ENCODE measurements at regions of chr7 and their contacts with region 1.

Region 1: DNA sequence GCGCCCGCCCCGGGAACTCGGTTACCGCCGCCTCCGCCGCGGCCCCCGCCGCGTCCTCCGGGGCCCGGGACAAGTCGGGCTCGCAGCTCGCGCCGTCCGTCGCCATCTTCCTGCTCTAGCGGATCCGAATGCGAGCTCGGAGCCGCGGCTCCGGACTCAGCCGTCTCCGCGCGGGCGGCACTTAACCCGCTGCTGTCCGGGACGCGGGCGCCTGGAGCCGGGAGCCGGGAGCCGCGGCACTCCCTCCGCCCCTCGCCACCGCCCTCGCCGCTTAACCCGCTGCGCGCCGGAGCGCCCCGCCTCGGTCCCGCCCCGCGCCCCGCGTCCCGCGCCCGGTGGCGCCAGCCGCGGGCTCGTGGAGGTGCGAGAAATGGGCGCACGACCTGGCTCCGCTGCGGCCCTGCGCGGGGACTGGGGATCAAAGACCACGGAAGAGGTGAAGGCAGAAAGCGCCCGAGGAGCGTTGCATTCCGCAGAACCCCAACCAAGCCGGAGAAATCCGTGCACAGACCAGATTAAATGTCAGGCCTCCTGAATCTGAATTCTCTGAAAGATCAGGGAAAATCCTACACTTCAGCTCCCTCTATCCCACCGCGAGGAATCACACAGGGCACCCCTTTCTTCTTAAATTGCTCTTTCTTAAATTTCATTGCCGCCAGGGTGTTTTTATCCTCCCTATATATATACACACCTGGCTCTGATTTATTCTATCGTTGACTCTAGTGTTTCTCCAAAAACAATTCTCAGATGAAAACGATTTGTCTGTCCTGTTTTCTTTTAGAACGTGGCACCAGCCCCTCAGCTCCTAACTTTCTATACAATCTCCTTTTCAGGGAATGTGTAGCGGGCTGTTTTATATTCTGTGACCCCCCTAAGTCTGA is at the start of gene CTTNBP2:
- DNase-seq: peak; percentile 45 to 85 (median 69)
- H3K4me3 ChIP-seq: peak within 1 kb of the TSS; percentile 64 to 99 (median 93)
- H3K27ac ChIP-seq: peak within 1 kb of the TSS; percentile 52 to 99 (median 97)
- H3K27me3 ChIP-seq: no peaks in the 10 kb centered on the region
- CTCF ChIP-seq: peak in 24 of 56 donors; percentile 4 to 38 (median 20)
- total RNA-seq, gene CTTNBP2: 32.0 to 119 (median 57.5) TPM

Region 2: GRCh38 chr7:117673839-117674238 is 199.7 kb before region 1 on chr7:
- intact Hi-C with region 1: loop called in 1 of 2 experiments (anchors 5 kb)
- DNase-seq: no peak
- H3K4me3 ChIP-seq: peak overlapping the region in 53 of 59 donors; percentile 2 to 68 (median 38)
- H3K27ac ChIP-seq: peak overlapping the region in 54 of 59 donors; percentile 18 to 89 (median 72)
- H3K27me3 ChIP-seq: peaks cover 0 to 4% (median 0%) of the 10 kb centered on the region in 45 donors
- CTCF ChIP-seq: peak in 55 of 56 donors; percentile 21 to 71 (median 51)

Region 3: GRCh38 chr7:117750612-117751563 is 122.7 kb before region 1 on chr7:
- intact Hi-C with region 1: loop called (anchors 1 to 2 kb)
- DNase-seq: no peak
- H3K4me3 ChIP-seq: peak overlapping the region in 4 of 59 donors; percentile 16 to 45 (median 18)
- H3K27ac ChIP-seq: peak overlapping the region; percentile 18 to 96 (median 84)
- H3K27me3 ChIP-seq: no peaks in the 10 kb centered on the region
- CTCF ChIP-seq: peak; percentile 50 to 90 (median 73)

Region 4: DNA sequence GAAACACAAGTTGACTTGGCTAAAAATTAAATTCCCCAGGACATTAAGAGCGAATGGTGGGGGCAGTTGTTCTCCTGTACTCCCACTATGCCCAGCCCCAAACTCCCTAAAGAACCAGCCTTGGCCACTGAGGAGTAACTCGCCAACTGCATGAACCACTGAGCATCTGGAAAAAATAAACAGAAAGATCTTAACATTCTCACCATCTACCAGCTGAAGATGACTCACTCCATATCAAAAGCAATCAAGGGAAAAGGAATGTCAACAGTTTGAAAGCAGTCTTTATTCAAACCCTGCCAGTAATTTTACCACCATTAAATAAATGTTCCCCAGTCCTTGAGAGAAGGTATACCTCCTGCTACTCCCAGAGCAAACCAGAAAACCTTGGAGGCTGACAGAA is 45.7 kb before region 1 on chr7:
- intact Hi-C with region 1: loop called in 1 of 2 experiments (anchors 2 kb)
- DNase-seq: no peak
- H3K4me3 ChIP-seq: peak overlapping the region in 2 of 59 donors; percentile 5 to 9
- H3K27ac ChIP-seq: peak overlapping the region in 58 of 59 donors; percentile 20 to 93 (median 83)
- H3K27me3 ChIP-seq: no peaks in the 10 kb centered on the region
- CTCF ChIP-seq: no peak

Region 5: DNA sequence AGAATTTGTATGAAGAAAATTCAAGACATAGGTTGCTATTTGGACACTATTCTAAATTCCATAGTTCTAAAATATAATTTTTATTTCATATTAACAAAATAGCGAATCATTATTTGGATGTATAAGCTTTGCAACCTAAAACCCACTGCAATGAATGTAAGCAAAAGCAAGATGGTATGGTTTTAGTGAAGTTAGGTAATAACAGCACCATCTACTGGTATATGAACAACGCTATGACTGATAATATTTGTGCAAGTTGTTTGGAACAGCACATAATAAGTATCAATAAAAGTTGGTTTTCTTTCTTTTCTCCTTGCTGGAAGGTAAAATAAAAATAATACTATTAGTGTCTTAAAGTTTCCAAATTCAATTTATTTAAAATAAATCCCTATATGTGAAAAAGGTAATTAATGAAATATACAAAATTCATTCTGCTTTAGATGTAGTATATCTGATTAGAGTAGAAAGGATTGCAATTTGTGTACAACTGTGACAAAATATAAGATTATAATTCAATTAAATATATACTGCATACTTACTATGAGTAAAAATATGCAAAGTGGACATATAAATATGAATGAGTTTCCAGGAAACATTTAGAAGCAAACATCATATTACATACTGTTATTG is 231.4 kb after region 1 on chr7:
- intact Hi-C with region 1: loop called in 1 of 2 experiments (anchors 10 kb)
- DNase-seq: no peak
- H3K4me3 ChIP-seq: no peak overlapping the region
- H3K27ac ChIP-seq: no peak overlapping the region
- H3K27me3 ChIP-seq: no peaks in the 10 kb centered on the region
- CTCF ChIP-seq: peak in 55 of 56 donors; percentile 44 to 83 (median 70)

Region 6: GRCh38 chr7:118183786-118184564 is 310.4 kb after region 1 on chr7 and contains the start of gene LSM8:
- intact Hi-C with region 1: loop called in 1 of 2 experiments (anchors 10 kb)
- DNase-seq: peak; percentile 91 to 96 (median 96)
- H3K4me3 ChIP-seq: peak within 1 kb of the TSS; percentile 65 to 98 (median 91)
- H3K27ac ChIP-seq: peak within 1 kb of the TSS; percentile 30 to 95 (median 85)
- H3K27me3 ChIP-seq: no peaks in the 10 kb centered on the region
- CTCF ChIP-seq: peak in 35 of 56 donors; percentile 5 to 62 (median 27)
- total RNA-seq, gene LSM8: 12.1 to 33.6 (median 20.0) TPM

Measured in dorsolateral prefrontal cortex (tissue), 120 donors.